B cell (primary cell): ENCODE measurements at regions of chr11 and their contacts with region 1.

Region 1: DNA sequence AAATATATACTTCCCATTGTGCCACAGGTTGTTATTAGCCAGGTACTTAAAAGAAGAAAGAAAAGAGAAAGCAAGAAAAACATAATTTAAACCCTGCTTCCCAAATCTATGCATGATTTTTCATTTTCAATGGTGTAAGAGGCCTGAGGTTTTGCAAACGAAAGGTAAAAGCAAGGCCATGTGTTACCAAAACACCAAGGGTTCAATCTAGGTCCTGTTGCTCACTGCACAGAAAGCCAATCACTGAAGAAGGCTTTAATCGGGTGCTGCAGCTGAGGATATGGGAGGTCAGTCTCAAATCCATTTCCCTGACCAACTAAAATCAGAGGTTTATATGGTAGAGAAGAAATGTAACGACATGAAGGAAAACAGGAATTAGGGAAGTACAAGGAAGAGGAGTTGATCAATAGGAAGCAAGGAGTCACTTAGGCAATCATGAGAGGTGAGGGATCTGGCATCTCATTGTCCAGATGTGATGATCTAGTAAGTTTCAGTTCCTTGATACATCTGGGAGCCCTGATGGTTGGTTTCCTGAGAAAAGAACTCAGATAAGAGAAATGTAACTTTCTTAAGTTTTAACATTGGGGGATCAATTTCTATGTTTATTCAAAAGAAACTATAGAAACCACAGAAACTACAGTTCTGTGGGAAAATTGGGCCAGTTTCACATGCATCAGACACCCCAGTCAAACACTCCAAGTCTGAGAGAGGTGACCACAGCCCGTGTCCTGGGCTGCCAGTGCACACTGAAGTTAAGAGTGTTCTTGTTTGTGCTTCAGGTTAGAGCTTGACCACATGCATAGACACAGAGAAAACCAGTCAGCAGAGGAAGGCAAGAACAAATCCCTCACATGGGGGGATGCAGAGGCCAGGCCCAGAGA is 18.1 kb upstream of the DKK3 start:
- DNase-seq: no peak
- ATAC-seq: no peak
- H3K4me3 ChIP-seq: no peak overlapping the region
- H3K4me3 Mint-ChIP-seq: no peak overlapping the region
- H3K27ac ChIP-seq: no peak overlapping the region
- H3K27ac Mint-ChIP-seq: no peak overlapping the region
- H3K4me1 ChIP-seq: no peaks in the 10 kb centered on the region
- H3K4me1 Mint-ChIP-seq: no peaks in the 10 kb centered on the region
- H3K27me3 ChIP-seq: peaks cover 0 to 5% (median 0%) of the 10 kb centered on the region in 4 experiments
- H3K27me3 Mint-ChIP-seq: peaks cover 29% of the 10 kb centered on the region
- CTCF ChIP-seq: no peak

Region 2: GRCh38 chr11:11987503-11988022 is 39.0 kb before region 1 on chr11:
- CTCF ChIA-PET with region 1: no interaction called
- POLR2A ChIA-PET with region 1: no interaction called
- intact Hi-C with region 1: loop called (anchors 2 kb)
- DNase-seq: no peak
- ATAC-seq: no peak
- H3K4me3 ChIP-seq: no peak overlapping the region
- H3K4me3 Mint-ChIP-seq: no peak overlapping the region
- H3K27ac ChIP-seq: no peak overlapping the region
- H3K27ac Mint-ChIP-seq: no peak overlapping the region
- H3K4me1 ChIP-seq: no peaks in the 10 kb centered on the region
- H3K4me1 Mint-ChIP-seq: no peaks in the 10 kb centered on the region
- H3K27me3 ChIP-seq: no peaks in the 10 kb centered on the region
- H3K27me3 Mint-ChIP-seq: peaks cover 15% of the 10 kb centered on the region
- CTCF ChIP-seq: peak; percentile 16